AG04450 (cell line): ENCODE measurements at regions of chr11 and their contacts with region 1.

Region 1: DNA sequence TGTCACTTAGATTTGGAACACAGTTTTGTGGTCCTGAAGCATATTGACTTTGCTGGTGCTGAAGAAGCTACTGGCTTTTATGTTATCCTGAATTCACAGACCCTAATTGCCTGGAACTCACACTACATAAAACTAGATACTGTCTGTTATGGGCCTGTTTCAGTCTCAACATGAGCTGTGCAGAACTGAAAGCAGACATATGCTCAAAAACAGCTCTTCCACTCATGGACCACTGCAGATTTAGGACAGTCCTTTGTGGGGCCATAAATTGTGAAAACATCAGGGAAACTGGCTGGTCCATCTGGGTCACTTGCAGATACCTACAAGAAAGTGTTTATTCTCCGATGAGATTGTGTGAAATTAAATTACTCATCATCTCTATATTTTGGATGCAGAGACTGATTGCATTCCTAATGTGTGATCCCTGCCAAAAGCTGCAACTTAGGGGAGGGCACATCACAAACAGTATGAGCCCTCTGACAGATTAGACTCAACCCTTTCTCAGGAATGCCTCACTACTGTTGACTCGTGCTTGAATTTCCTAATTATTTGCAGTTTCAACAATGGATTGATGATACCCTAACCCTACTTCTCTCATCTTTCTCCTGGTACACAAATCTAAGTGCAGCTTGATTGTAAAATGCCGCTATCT is 10.2 kb upstream of the CLNS1A start:
- DNase-seq: no peak
- H3K4me3 ChIP-seq: no peak overlapping the region
- H3K27ac ChIP-seq: no peak overlapping the region
- H3K27me3 ChIP-seq: no peaks in the 10 kb centered on the region
- CTCF ChIP-seq: no peak

Region 2: GRCh38 chr11:77637345-77638165 is 10.2 kb before region 1 on chr11 and contains the start of gene CLNS1A:
- CTCF ChIA-PET with region 1: no interaction called
- POLR2A ChIA-PET with region 1: no interaction called
- DNase-seq: peak; percentile 66
- H3K4me3 ChIP-seq: peak within 1 kb of the TSS; percentile 72
- H3K27ac ChIP-seq: peak within 1 kb of the TSS; percentile 40
- H3K27me3 ChIP-seq: no peaks in the 10 kb centered on the region
- CTCF ChIP-seq: no peak
- polyA plus RNA-seq, gene CLNS1A: 158 and 186 TPM in 2 replicates

Region 3: GRCh38 chr11:77658213-77659013 is 10.6 kb after region 1 on chr11:
- CTCF ChIA-PET with region 1: no interaction called
- POLR2A ChIA-PET with region 1: interaction called, 10 read pairs
- DNase-seq: no peak
- H3K4me3 ChIP-seq: no peak overlapping the region
- H3K27ac ChIP-seq: peak overlapping the region; percentile 41
- H3K27me3 ChIP-seq: no peaks in the 10 kb centered on the region
- CTCF ChIP-seq: no peak